OCI-LY7 (cell line): ENCODE measurements at regions of chr2 and their contacts with region 1.

Region 1: DNA sequence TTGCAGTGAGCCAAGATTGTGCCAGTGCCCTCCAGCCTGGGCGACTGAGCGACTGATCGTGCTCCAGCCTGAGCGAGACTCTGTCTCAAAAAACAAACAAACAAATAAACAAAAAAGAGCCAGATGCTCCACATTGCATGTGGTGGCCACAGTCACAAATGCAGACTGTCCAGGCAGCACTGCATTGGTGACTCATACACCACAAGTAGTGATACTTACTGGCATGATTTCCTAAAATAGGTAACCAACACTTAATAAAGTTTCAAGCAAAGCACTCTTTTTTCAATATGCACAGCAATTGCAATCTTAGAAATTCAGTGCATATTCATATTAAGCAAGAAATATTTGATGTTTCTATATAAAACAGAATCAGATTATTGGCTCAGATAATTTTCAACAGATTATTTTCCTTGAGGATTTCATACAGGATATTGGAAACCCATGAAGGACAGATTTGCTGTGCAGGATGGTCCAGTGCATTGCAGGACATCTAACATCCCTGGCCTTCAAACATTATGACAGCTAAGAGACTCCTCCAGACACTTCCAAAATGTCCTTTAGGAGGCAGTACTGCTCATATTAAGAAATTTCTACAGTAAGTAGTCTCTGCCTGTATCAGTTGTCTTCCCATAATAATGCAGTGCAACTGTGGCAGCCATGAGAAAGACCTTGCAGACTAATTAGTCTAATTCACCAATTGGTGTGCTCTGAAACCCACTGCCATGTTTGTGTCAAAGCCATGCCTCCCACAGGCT is 10.5 kb upstream of the SLC1A4 start:
- DNase-seq: peak; percentile 32
- H3K4me3 ChIP-seq: no peak overlapping the region
- H3K27ac ChIP-seq: no peak overlapping the region
- H3K4me1 ChIP-seq: peaks cover 9% of the 10 kb centered on the region
- CTCF ChIP-seq: peak; percentile 71

Region 2: DNA sequence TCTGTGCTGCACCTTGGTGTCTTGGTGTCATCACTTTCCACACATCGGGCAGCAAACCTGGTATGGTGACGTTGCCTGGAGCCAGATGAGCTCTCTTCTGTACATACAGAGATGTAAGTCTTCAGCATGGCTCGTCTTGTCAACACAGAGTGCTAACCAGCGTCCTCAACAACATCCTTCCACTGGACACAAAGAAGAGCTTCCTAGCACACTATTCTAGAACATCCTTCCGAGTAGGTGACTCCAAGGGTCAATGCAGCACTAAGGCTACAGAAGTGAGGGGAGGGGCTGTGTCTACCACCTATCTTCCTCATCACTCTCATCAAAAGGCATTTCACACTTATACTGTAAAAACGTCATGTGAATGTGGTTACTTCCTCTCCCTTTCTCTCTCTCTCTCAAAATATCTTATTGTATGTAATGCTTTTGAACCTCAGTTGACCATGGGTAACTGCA is 97.6 kb before region 1 on chr2:
- CTCF ChIA-PET with region 1: no interaction called
- POLR2A ChIA-PET with region 1: no interaction called
- intact Hi-C with region 1: no loop called
- DNase-seq: no peak
- H3K4me3 ChIP-seq: no peak overlapping the region
- H3K27ac ChIP-seq: no peak overlapping the region
- H3K4me1 ChIP-seq: no peaks in the 10 kb centered on the region
- CTCF ChIP-seq: no peak

Region 3: DNA sequence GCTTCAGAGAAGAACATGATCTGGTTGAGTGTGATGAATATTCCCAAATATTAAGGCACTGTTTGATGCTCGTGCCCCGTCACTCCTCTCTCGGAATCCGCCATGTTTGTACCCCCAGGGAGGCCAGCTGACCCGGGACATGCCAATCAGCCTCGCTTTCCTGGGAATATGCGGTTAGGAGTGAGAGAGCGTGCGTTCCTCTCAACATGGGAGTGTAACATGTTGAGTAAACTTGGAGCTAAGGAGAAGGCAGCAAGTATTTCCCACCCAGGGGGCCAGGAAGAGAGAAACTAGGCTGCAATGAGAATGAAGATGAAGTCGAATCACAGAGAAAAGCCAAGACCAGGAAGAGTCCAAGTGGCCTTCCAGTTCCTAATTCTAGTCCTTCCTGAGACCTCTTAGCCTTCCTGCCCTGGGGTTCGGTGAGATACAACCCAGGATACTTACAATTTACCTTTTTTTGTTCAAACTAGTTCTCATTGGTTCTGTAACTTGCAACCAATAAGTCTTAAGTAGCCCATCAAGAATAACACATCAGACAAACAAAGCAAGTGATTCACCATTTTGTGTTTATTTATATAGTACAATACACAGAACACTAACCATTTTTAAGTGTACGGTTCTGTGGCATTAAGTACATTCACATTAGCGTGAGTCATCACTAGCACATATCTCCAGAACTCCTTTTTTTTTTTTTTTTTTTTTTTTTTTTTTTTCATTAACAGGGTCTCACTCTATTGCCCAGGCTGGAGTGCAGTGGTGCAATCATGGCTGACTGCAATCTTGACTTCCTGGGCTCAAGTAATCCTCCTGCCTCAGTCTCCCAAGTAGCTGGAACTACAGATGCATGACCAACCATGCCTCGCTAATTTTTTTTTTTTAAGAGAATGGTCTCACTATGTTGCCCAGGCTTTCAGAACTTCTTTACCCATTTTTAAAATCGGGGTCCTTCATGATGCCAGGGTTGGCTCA is 25.9 kb before region 1 on chr2:
- CTCF ChIA-PET with region 1: no interaction called
- POLR2A ChIA-PET with region 1: interaction called, 10 read pairs
- intact Hi-C with region 1: no loop called
- DNase-seq: no peak
- H3K4me3 ChIP-seq: no peak overlapping the region
- H3K27ac ChIP-seq: no peak overlapping the region
- H3K4me1 ChIP-seq: peaks cover 8% of the 10 kb centered on the region
- CTCF ChIP-seq: no peak

Region 4: DNA sequence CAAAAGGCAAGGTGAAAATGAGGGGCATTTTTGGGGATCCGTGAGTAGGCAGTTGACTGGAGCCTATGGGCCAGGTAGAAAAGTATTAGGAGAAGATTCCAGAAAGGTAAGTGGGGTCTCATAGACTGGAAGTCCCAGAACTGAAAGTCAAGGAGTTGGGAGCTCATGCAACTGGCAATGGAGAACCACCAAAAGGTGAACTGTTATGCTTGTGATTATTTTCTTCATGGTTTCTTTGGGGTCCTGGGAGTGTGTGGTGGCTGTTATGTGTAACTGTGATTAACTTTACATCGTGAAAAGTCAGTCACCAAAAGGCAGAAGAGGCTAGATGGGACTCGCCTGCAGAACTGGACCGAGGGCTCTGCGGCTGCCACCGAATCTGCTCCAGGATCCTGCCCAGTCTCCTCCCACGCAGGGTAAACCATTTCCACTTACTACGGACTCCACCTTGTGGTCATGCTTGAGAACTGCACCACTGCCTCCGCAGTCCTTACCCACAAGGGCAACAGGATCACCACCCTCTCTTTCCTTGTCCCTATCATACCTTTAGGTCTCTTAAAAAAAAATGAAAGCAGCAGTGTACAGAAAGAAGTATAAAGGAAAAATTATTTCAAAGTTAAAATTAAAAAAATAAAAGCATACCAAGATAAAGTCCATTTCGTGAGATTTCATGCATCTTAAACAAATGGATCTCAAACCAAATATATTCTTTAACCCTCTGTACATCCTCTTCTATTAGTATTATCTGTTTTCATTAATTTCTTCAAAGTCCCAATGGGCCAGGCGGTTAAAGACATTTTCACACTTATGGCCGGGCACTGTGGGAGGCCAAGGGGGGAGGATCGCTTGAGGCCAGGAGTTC is 61.9 kb after region 1 on chr2:
- CTCF ChIA-PET with region 1: no interaction called
- POLR2A ChIA-PET with region 1: no interaction called
- intact Hi-C with region 1: no loop called
- DNase-seq: peak; percentile 85
- H3K4me3 ChIP-seq: no peak overlapping the region
- H3K27ac ChIP-seq: no peak overlapping the region
- H3K4me1 ChIP-seq: peaks cover 9% of the 10 kb centered on the region
- CTCF ChIP-seq: peak; percentile 98

Region 5: DNA sequence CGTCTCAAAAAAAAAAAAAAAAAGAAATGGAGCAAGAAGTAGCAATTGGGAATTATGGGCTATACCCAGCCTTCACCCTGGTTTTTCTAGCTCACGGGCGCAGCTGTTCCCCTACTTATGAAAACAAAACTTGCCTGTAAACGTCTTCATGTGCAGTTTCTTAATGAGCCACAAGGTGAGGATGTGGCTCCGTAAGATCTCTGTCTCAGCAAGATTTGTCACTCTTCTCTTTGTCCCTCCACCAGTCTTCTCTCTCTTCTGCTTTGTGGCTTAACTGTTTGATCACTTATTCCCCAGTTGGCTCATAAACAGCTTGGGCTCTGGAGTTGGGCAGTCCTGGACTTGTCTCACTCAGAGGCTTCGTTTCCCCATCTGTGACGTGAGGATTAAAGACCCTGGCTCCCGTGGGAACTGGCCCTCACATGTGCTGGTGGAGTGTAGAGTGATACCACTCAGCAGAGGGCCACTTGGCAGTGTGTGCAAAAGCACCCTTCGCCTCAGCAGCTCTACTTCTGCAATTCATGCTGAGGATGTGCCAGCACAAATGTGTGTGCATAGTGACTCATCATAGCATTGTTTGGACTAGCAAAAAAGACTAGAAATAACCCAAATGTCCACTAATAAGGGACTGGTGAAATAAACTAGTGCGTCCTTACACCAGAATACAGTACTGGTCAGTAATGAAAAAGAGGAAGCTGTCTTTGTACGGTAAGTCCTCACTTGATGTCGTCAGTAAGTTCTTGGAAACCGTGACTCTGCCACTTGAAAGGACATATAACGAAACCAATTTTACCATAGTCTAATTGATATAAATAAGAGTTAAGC is 86.2 kb after region 1 on chr2:
- CTCF ChIA-PET with region 1: no interaction called
- POLR2A ChIA-PET with region 1: no interaction called
- intact Hi-C with region 1: no loop called
- DNase-seq: peak; percentile 88
- H3K4me3 ChIP-seq: peak overlapping the region; percentile 43
- H3K27ac ChIP-seq: peak overlapping the region; percentile 67
- H3K4me1 ChIP-seq: peaks cover 46% of the 10 kb centered on the region
- CTCF ChIP-seq: peak; percentile 89